ENCODE measurements at regions of chr9 and their contacts with region 1.

Region 1: DNA sequence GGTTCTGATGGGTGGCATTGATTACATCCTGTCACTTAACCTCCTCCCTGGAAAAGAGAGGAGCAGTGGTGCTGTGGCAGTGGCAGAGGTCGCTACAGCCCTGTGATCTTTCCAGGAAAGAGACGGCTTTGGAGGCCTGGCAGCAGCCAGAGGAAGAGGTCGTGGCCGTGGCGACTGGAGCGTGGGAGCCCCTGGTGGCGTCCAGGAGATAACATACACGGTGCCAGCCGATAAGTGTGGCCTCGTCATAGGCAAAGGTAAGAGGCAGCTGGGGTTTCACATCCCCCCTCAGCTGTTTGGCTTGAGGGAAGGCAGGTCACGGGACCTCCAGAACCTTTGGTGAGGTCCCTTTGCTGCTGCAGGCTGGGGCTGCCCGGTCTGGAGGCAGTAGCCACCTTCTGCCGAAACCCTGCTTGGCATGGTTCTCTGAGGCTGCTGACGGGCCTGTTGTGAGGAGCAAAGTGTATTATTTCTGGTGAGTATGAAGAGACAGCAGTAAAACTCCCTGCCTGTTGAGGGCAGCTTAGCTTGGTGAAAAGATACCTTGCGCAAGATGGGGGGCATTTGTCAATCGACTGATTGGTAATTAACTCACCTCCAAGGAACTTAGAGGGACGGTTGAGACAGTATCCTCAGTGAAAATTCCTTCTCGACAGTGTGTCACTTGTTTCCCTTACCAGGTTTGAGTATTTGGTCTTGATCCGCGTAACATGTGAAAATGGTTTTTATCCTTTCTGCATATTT is 38.0 kb upstream of the PRDM12 start:
- DNase-seq: no peak
- H3K4me3 ChIP-seq: no peak overlapping the region
- CTCF ChIP-seq: peak; percentile 7

Region 2: DNA sequence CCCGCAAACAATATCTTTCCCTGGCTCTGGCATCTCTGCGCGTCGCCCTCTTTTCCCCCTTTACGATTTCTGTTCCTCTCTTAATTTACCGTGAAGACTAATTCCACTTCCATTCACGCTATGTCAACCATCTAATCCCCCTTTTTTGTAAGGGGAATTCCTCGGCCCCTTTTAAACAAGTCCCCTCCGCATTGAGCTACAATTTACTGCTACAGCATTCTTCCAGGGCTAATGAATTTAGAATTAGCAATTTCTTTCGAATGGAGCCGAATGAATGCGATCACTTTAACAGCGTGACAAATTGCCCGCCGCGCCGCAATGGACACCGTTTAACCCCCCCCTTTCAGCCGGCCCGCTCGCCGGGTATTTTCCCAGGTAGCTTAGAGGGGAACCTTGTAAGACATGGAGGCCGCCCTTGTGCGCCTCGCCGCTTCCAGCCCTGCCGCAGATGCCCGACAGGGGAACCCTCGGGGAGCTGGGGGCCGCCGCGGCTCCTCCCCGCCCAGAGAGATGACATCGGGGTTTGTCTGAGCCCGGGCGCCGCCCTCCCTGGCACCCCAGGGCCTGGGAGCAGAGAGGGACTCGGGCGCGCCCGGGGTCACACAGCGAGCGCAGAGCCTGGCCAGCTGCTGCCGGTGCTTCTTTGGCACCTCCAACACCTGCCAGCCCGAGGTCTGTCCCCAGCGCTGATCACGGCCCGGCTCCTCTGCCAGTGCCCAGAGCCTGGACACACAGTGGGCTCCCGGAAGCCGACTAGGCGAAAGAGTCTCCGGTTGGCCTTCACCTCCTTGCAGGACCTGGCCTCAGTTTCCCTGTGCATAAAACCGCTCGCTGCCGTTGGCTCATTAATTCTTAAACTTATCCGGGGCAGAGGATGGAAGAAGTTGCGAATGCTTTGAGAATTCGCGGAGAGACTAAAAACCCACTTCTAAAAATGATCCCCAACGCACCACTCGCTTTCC is 39.3 kb after region 1 on chr9:
- in situ Hi-C with region 1: loop called (anchors 5 kb)
- DNase-seq: no peak
- H3K4me3 ChIP-seq: no peak overlapping the region
- CTCF ChIP-seq: no peak

Region 3: GRCh38 chr9:130698514-130698913 is 72.1 kb after region 1 on chr9:
- in situ Hi-C with region 1: loop called (anchors 5 kb)
- DNase-seq: peak; percentile 96
- H3K4me3 ChIP-seq: no peak overlapping the region
- CTCF ChIP-seq: no peak